ENCODE measurements at regions of chr10 and their contacts with region 1.

Region 1: DNA sequence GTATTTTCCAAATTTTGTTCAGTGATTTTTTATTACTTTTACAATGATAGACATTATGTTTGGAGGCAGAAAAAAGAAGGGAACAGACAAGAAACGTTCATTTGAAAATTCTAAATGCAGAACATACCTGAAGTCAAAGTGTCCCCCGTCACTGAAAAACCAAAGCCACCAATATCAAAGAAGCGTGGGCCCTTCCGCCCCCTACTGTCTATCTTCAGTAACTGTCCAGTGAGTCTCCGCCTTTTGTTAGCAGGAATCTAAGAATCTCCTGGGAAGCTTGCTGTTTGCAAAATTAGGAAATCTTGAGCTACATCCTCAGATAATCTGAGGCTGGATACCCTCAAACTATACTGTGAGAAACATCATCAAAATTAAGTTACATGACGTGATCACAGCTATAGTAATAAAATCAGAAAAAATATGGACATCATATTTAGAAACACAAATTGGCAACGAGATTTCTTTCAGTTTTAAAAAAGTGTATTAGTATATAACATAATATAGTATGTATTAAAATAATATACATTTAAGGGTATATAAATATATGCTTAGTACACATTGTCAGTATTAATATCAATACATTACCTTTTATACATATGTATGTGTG is 169.3 kb upstream of the AKR1E2 start:
- DNase-seq: peak; percentile 23 to 62 (median 30)
- H3K4me3 ChIP-seq: no peak overlapping the region
- H3K4me3 Mint-ChIP-seq: no peak overlapping the region
- H3K27ac ChIP-seq: no peak overlapping the region
- H3K27ac Mint-ChIP-seq: no peak overlapping the region
- H3K4me1 ChIP-seq: no peaks in the 10 kb centered on the region
- H3K4me1 Mint-ChIP-seq: peaks cover 8 to 11% (median 11%) of the 10 kb centered on the region in 3 donors
- H3K27me3 ChIP-seq: no peaks in the 10 kb centered on the region
- H3K27me3 Mint-ChIP-seq: peaks cover 4 to 19% of the 10 kb centered on the region in 2 donors

Region 2: GRCh38 chr10:3197348-3198003 is 1459.2 kb before region 1 on chr10:
- CTCF ChIA-PET with region 1: interaction called, 14 read pairs
- POLR2A ChIA-PET with region 1: no interaction called
- DNase-seq: peak; percentile 8 to 90 (median 67)
- H3K4me3 ChIP-seq: peak overlapping the region; percentile 51
- H3K4me3 Mint-ChIP-seq: peak overlapping the region; percentile 49 to 92 (median 81)
- H3K27ac ChIP-seq: no peak overlapping the region
- H3K27ac Mint-ChIP-seq: peak overlapping the region in 7 of 8 donors; percentile 14 to 96 (median 74)
- H3K4me1 ChIP-seq: peaks cover 19% of the 10 kb centered on the region
- H3K4me1 Mint-ChIP-seq: peaks cover 15 to 34% (median 26%) of the 10 kb centered on the region in 3 donors
- H3K27me3 ChIP-seq: peaks cover 16% of the 10 kb centered on the region
- H3K27me3 Mint-ChIP-seq: peaks cover 20 to 29% of the 10 kb centered on the region in 2 donors

Region 3: GRCh38 chr10:3239066-3239919 is 1417.4 kb before region 1 on chr10:
- CTCF ChIA-PET with region 1: interaction called, 15 read pairs
- POLR2A ChIA-PET with region 1: no interaction called
- DNase-seq: peak; percentile 47 to 77 (median 54)
- H3K4me3 ChIP-seq: no peak overlapping the region
- H3K4me3 Mint-ChIP-seq: peak overlapping the region in 2 of 7 donors; percentile 17
- H3K27ac ChIP-seq: no peak overlapping the region
- H3K27ac Mint-ChIP-seq: no peak overlapping the region
- H3K4me1 ChIP-seq: no peaks in the 10 kb centered on the region
- H3K4me1 Mint-ChIP-seq: peaks cover 3 to 8% (median 5%) of the 10 kb centered on the region in 3 donors
- H3K27me3 ChIP-seq: no peaks in the 10 kb centered on the region
- H3K27me3 Mint-ChIP-seq: peaks cover 7 to 13% of the 10 kb centered on the region in 2 donors

Region 4: DNA sequence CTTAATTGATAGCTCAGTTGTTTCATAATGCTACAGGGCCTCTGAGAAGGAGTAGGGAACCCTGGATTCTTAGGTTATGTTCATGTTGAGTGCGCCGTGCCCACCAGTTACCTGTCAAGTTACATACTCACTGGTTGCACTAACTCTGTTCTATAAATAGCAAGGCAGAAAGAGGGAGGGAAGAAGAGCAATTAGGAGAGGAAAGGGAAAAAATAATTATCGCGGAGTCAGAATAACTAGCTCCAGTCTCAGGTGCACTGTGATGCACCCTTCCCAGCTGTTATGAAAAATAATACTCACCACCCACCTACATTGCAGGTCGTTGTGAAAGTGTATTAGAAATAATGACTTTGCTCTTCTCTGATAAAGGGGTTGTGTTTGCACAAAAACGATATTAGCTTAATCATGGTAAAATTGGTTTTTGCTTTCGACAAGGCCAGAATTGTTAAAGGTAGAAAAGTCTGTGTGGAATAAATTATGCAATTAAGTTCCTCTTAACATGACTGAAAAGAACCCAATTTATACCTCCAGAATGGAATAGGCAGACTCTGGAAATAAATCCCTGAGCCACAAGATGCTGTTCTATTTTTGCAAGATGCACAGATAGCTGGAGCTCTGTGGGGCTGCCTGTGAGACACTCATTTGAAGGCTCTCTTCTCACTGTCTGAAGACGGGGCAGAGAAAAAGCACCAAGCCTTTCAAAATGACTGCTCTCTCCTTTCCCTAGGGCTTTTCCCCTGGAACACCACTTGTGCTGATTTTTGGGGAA is 1346.5 kb before region 1 on chr10:
- CTCF ChIA-PET with region 1: no interaction called
- POLR2A ChIA-PET with region 1: interaction called, 11 read pairs
- DNase-seq: no peak
- H3K4me3 ChIP-seq: no peak overlapping the region
- H3K4me3 Mint-ChIP-seq: no peak overlapping the region
- H3K27ac ChIP-seq: no peak overlapping the region
- H3K27ac Mint-ChIP-seq: no peak overlapping the region
- H3K4me1 ChIP-seq: no peaks in the 10 kb centered on the region
- H3K4me1 Mint-ChIP-seq: no peaks in the 10 kb centered on the region
- H3K27me3 ChIP-seq: no peaks in the 10 kb centered on the region
- H3K27me3 Mint-ChIP-seq: peaks cover 23 to 65% of the 10 kb centered on the region in 2 donors

Measured in CD8-positive, alpha-beta memory T cell (primary cell).